Mammary epithelial cell (primary cell): ENCODE measurements at regions of chr15 and their contacts with region 1.

Region 1: GRCh38 chr15:40108855-40109735 is at the start of gene BMF:
- DNase-seq: peak; percentile 97
- H3K4me3 ChIP-seq: peak within 1 kb of the TSS; percentile 55 to 72 (median 67)
- H3K27ac ChIP-seq: no peak within 1 kb of the TSS
- H3K4me1 ChIP-seq: peaks cover 26% of the 10 kb centered on the region
- H3K27me3 ChIP-seq: no peaks in the 10 kb centered on the region
- CTCF ChIP-seq: peak in 1 of 2 donors; percentile 35
- total RNA-seq, gene BMF: 1.5 to 2.2 TPM

Region 2: GRCh38 chr15:40044717-40045571 is 64.2 kb before region 1 on chr15:
- CTCF ChIA-PET with region 1: interaction called, 3 read pairs
- dilution Hi-C with region 1: loop called (anchors 5 kb)
- in situ Hi-C with region 1: no loop called
- intact Hi-C with region 1: loop called (anchors 1 kb)
- DNase-seq: peak; percentile 75
- H3K4me3 ChIP-seq: peak overlapping the region in 1 of 3 experiments; percentile 3
- H3K27ac ChIP-seq: peak overlapping the region; percentile 23
- H3K4me1 ChIP-seq: peaks cover 35% of the 10 kb centered on the region
- H3K27me3 ChIP-seq: no peaks in the 10 kb centered on the region
- CTCF ChIP-seq: peak; percentile 84 to 94

Region 3: DNA sequence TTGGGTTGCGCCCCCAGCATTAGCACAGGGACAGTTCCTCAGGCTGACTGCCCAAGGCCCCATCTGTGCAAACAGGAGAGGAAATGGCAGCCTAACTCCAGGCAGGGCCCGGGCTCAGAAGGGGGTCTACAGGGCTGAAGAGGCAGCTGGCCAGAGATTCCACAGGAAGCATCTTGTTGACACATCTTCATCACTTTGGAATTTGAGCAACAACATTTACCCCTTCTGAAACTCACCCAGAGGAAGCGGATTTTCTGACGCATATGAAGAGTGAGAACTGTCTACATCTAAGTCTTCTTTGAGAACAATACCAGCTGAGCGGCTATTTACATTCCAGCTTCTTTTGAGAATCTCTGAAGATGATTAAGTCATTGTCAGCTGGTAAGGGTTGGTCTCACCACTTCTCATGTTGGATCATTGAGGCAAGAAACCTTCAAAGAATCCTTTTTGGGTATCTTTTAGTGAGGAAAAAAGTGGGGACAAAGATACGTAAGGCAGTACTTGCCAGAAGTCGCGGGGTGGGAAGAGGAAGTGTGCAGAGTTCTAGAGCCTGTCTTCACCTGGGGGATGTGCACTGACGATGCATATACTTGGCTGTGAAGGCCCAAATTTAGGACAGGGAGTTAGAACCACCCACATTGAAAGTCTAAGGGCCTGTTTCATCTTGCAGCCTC is 44.7 kb before region 1 on chr15:
- CTCF ChIA-PET with region 1: no interaction called
- dilution Hi-C with region 1: no loop called
- in situ Hi-C with region 1: no loop called
- intact Hi-C with region 1: loop called (anchors 5 kb)
- DNase-seq: no peak
- H3K4me3 ChIP-seq: no peak overlapping the region
- H3K27ac ChIP-seq: no peak overlapping the region
- H3K4me1 ChIP-seq: peaks cover 41% of the 10 kb centered on the region
- H3K27me3 ChIP-seq: no peaks in the 10 kb centered on the region
- CTCF ChIP-seq: no peak

Region 4: GRCh38 chr15:40150163-40150925 is 41.2 kb after region 1 on chr15:
- CTCF ChIA-PET with region 1: no interaction called
- dilution Hi-C with region 1: loop called (anchors 5 kb)
- in situ Hi-C with region 1: no loop called
- intact Hi-C with region 1: loop called (anchors 2 kb)
- DNase-seq: peak; percentile 97
- H3K4me3 ChIP-seq: no peak overlapping the region
- H3K27ac ChIP-seq: peak overlapping the region; percentile 35
- H3K4me1 ChIP-seq: peaks cover 49% of the 10 kb centered on the region
- H3K27me3 ChIP-seq: no peaks in the 10 kb centered on the region
- CTCF ChIP-seq: no peak

Region 5: DNA sequence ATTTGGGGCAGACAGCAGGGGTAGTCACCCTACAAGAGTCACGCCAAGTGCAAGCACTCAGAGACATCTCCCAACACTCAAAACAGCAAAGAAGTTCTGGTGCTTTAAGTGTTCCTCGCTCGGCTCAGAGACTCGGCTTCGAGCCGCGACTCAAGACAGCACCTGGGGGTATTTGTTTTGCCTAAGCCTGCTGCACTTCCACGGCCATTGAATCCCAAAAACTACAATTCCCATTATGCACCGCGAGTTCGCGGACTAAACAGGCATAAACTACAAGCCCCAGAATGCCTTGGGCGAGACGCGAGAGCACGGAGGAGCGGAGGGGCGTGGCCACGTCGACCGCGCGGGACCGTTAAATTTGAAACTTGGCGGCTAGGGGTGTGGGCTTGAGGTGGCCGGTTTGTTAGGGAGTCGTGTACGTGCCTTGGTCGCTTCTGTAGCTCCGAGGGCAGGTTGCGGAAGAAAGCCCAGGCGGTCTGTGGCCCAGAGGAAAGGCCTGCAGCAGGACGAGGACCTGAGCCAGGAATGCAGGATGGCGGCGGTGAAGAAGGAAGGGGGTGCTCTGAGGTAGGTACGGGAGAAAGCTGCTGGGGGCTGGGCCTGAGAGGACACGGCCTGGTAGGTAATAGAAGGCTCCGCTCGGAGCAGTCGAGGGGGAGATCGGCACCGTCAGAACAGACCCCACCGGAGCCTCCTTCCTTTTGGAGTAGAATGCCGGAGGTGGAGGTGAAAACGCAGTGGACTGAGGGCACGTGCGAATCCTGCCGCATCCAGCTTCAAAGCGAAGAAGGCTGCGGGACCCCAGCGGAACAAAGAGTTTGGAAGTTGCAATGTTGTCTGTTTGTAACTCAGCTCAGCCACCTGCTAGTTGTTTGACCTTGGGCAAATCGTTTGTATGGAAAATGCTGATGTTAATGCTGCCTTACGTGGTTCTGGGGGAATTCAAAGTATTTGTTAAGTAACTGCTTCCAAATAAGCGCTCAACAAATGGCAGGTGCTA is 51.9 kb after region 1 on chr15 and contains the start of gene BUB1B:
- CTCF ChIA-PET with region 1: interaction called, 3 read pairs
- dilution Hi-C with region 1: no loop called
- in situ Hi-C with region 1: no loop called
- intact Hi-C with region 1: loop called (anchors 2 kb)
- DNase-seq: peak; percentile 90
- H3K4me3 ChIP-seq: peak within 1 kb of the TSS; percentile 81 to 97 (median 88)
- H3K27ac ChIP-seq: peak within 1 kb of the TSS; percentile 50
- H3K4me1 ChIP-seq: peaks cover 14% of the 10 kb centered on the region
- H3K27me3 ChIP-seq: no peaks in the 10 kb centered on the region
- CTCF ChIP-seq: no peak
- total RNA-seq, gene BUB1B: 2.8 to 34.6 TPM

Region 6: GRCh38 chr15:40190591-40190990 is 81.5 kb after region 1 on chr15:
- CTCF ChIA-PET with region 1: no interaction called
- dilution Hi-C with region 1: no loop called
- in situ Hi-C with region 1: no loop called
- intact Hi-C with region 1: loop called (anchors 5 kb)
- DNase-seq: peak; percentile 67
- H3K4me3 ChIP-seq: no peak overlapping the region
- H3K27ac ChIP-seq: peak overlapping the region; percentile 29
- H3K4me1 ChIP-seq: peaks cover 9% of the 10 kb centered on the region
- H3K27me3 ChIP-seq: no peaks in the 10 kb centered on the region
- CTCF ChIP-seq: no peak

Region 7: GRCh38 chr15:40204100-40204499 is 95.0 kb after region 1 on chr15:
- CTCF ChIA-PET with region 1: no interaction called
- dilution Hi-C with region 1: loop called (anchors 5 kb)
- in situ Hi-C with region 1: no loop called
- intact Hi-C with region 1: no loop called
- DNase-seq: no peak
- H3K4me3 ChIP-seq: no peak overlapping the region
- H3K27ac ChIP-seq: no peak overlapping the region
- H3K4me1 ChIP-seq: no peaks in the 10 kb centered on the region
- H3K27me3 ChIP-seq: no peaks in the 10 kb centered on the region
- CTCF ChIP-seq: no peak

Region 8: GRCh38 chr15:40367686-40368611 is 258.9 kb after region 1 on chr15:
- CTCF ChIA-PET with region 1: no interaction called
- dilution Hi-C with region 1: no loop called
- in situ Hi-C with region 1: no loop called
- intact Hi-C with region 1: no loop called
- DNase-seq: peak; percentile 88
- H3K4me3 ChIP-seq: no peak overlapping the region
- H3K27ac ChIP-seq: no peak overlapping the region
- H3K4me1 ChIP-seq: peaks cover 19% of the 10 kb centered on the region
- H3K27me3 ChIP-seq: no peaks in the 10 kb centered on the region
- CTCF ChIP-seq: peak; percentile 60 to 64